Activated CD4-positive, alpha-beta T cell treated with anti-CD3 and anti-CD28 coated beads, Interleukin-2, amount 10 ng/mL, durations not matched to agents 24 days and 14 days (primary cell): ENCODE measurements at regions of chr18 and their contacts with region 1.

Region 1: DNA sequence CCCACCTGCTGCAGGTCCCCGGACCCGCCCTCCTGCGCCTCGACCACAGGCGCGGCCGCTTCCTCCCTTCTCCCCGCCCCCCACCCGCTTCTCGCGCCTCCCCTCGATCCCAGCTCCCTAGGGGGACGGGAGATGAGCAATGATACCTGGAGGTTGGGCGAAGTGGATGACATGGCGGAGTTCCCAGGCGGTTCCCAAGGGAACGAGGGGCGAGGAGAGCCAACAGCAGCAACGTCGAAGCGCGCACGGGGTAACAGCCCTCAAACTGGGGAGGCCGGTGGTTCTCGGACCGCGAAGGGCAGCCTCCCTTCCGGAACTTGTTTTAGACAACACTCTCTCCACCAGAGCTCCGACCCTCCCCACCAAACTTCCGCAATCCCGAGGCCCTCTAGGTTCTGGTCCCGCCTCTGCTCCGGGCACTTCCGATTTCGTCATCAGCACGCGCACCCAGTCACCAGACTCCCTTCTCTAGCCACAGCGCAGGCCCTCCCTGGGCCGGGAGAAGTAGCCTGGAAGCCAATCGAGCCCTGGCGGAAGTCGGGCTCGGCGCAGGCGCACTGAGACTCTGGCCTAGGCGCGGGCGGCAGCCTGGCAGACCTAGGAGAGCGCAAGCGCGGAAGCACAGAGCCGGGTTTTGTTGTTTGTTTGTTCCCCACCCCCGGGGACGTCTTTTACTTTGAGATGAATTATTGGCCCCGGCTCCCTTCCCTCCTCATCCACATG is at the start of gene VPS4B:
- DNase-seq: peak; percentile 100
- H3K4me3 Mint-ChIP-seq: peak within 1 kb of the TSS; percentile 98
- H3K27ac Mint-ChIP-seq: peak within 1 kb of the TSS; percentile 92
- H3K4me1 Mint-ChIP-seq: peaks cover 29% of the 10 kb centered on the region
- H3K27me3 Mint-ChIP-seq: peaks cover 2% of the 10 kb centered on the region
- total RNA-seq, gene VPS4B: 50.8 and 62.1 TPM in 2 replicates

Region 2: GRCh38 chr18:62186774-62187542 is 1235.3 kb before region 1 on chr18 and contains the starts of genes PIGN and RELCH:
- intact Hi-C with region 1: loop called (anchors 1 kb)
- DNase-seq: peak; percentile 98
- H3K4me3 Mint-ChIP-seq: peak within 1 kb of the TSS; percentile 100
- H3K27ac Mint-ChIP-seq: peak within 1 kb of the TSS; percentile 97
- H3K4me1 Mint-ChIP-seq: peaks cover 42% of the 10 kb centered on the region
- H3K27me3 Mint-ChIP-seq: no peaks in the 10 kb centered on the region
- total RNA-seq, gene PIGN: 32.0 and 33.9 TPM in 2 replicates
- total RNA-seq, gene RELCH: 30.6 and 31.1 TPM in 2 replicates

Region 3: DNA sequence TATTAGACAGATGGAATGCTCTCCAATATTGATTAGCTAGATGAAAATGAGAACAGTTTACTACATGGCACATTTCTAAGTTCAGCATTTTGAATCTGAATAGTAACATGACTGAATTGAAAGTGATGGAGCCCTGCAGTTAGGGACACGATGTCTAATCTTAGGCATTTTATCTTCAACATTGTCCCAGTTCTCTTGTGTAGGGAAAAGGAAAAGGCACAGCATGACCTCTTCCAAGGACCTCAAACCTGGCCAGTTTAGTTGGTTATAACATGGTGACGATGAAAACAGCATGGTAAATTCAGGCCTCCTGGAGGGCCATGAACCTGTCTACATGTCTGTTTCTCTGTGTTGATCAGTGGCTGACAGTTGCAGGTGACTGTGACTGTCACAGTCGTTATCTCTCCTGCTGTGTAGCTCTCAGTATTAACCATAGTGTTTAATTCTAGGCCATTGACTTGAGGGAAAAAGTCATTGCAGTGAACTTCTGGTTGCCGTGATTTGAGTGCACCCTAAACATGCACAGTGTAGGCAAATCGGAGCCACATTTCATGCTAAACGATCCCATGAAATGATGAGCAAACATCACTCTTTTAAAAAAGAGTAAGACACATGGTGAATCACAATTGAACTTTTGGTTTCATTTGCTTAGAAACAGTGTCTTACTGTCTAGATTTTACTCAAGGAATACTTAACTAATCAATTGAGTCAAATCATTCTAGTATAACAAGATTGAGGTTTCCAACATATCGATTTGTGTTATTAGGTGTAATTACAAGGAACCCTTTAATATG is 577.2 kb before region 1 on chr18:
- intact Hi-C with region 1: loop called (anchors 5 kb)
- DNase-seq: peak; percentile 72
- H3K4me3 Mint-ChIP-seq: peak overlapping the region; percentile 80
- H3K27ac Mint-ChIP-seq: peak overlapping the region; percentile 94
- H3K4me1 Mint-ChIP-seq: peaks cover 30% of the 10 kb centered on the region
- H3K27me3 Mint-ChIP-seq: no peaks in the 10 kb centered on the region

Region 4: GRCh38 chr18:63161761-63162195 is 260.5 kb before region 1 on chr18:
- intact Hi-C with region 1: loop called (anchors 5 kb)
- DNase-seq: peak; percentile 94
- H3K4me3 Mint-ChIP-seq: peak overlapping the region; percentile 83
- H3K27ac Mint-ChIP-seq: peak overlapping the region; percentile 98
- H3K4me1 Mint-ChIP-seq: peaks cover 87% of the 10 kb centered on the region
- H3K27me3 Mint-ChIP-seq: no peaks in the 10 kb centered on the region

Region 5: GRCh38 chr18:63367053-63367953 is 54.9 kb before region 1 on chr18 and contains the start of gene KDSR:
- intact Hi-C with region 1: loop called (anchors 1 kb)
- DNase-seq: peak; percentile 96
- H3K4me3 Mint-ChIP-seq: peak within 1 kb of the TSS; percentile 91
- H3K27ac Mint-ChIP-seq: peak within 1 kb of the TSS; percentile 81
- H3K4me1 Mint-ChIP-seq: peaks cover 29% of the 10 kb centered on the region
- H3K27me3 Mint-ChIP-seq: no peaks in the 10 kb centered on the region
- total RNA-seq, gene KDSR: 83.9 and 86.9 TPM in 2 replicates

Region 6: DNA sequence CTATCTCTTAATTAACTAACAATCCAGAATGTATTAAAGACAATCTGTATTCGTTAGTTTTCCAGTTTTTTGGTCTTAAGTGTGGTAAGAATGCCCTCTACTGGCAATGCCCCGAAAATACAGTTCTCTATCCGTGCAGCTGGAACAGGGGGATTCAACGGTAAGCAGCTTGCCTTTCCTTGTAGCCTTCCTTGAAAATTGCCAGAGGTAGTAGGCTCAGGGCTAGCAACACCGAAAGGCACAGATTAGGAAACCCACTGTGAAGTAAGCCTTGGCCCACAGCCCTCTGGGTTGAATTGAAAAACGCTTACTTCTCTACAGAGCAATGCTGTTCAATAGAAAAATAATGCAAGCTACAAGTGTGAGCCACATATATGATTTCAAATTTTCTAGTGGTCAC is 17.1 kb after region 1 on chr18:
- intact Hi-C with region 1: loop called (anchors 1 kb)
- DNase-seq: peak; percentile 85
- H3K4me3 Mint-ChIP-seq: no peak overlapping the region
- H3K27ac Mint-ChIP-seq: no peak overlapping the region
- H3K4me1 Mint-ChIP-seq: no peaks in the 10 kb centered on the region
- H3K27me3 Mint-ChIP-seq: peaks cover 29% of the 10 kb centered on the region